PC-3 (cell line): ENCODE measurements at regions of chr15 and their contacts with region 1.

Region 1: DNA sequence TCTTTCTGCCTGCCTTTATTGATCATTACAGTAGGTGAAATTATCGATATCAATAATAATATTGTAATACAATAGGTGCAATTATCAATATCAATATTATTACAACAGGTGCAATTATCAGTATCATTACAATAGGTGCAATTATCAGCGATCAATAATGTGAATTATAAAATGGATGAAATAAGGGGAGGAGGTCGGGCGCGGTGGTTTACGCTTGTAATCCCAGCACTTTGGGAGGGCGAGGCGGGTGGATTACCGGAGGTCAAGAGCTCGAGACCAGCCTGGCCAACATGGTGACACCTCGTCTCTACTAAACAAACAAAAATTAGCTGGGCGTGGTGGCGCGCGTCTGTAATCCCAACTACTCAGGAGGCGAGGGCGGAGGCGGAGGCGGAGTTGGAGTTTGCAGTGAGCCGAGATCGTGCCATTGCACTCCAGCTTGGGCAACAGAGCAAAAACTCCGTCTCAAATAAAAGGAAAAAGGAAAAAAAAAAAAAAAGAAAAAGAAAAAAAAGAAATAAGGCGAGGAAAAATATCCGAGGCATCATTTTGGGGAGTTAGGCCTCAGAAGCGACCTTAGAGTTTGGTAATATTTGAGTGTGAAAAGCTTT is 611 bp upstream of the BNIP2 start:
- DNase-seq: peak; percentile 52
- ATAC-seq: peak; percentile 63
- H3K4me3 ChIP-seq: peak overlapping the region; percentile 98
- H3K27ac ChIP-seq: no peak overlapping the region
- H3K4me1 ChIP-seq: peaks cover 19% of the 10 kb centered on the region
- H3K27me3 ChIP-seq: no peaks in the 10 kb centered on the region
- CTCF ChIP-seq: no peak

Region 2: DNA sequence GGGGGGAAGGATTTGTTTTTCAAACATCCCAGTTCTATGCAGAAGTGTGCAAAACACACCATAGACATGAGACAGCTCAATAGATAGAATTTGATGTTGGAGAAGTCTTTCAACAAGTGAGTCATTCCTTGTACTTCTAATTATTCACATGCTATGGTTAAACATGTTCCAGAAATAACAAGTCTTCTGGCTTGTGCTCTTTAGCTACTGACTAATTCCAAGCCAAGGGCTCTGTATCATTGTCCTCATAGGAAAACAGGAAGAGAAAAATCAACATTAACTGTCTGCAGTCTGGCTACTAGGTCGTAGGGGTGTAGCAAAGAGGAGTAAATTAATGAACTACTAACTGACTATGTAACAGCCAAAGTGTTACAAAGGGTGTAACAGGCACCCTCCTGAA is 457.3 kb before region 1 on chr15:
- CTCF ChIA-PET with region 1: no interaction called
- POLR2A ChIA-PET with region 1: no interaction called
- intact Hi-C with region 1: no loop called
- DNase-seq: peak; percentile 10
- ATAC-seq: peak; percentile 40; the same call in 1 of the 2 replicates
- H3K4me3 ChIP-seq: no peak overlapping the region
- H3K27ac ChIP-seq: no peak overlapping the region
- H3K4me1 ChIP-seq: no peaks in the 10 kb centered on the region
- H3K27me3 ChIP-seq: no peaks in the 10 kb centered on the region
- CTCF ChIP-seq: no peak

Region 3: GRCh38 chr15:59751552-59752413 is 62.1 kb after region 1 on chr15:
- CTCF ChIA-PET with region 1: interaction called, 10 read pairs
- POLR2A ChIA-PET with region 1: no interaction called
- intact Hi-C with region 1: no loop called
- DNase-seq: no peak
- ATAC-seq: no peak
- H3K4me3 ChIP-seq: no peak overlapping the region
- H3K27ac ChIP-seq: no peak overlapping the region
- H3K4me1 ChIP-seq: no peaks in the 10 kb centered on the region
- H3K27me3 ChIP-seq: peaks cover 60% of the 10 kb centered on the region
- CTCF ChIP-seq: peak; percentile 25

Region 4: DNA sequence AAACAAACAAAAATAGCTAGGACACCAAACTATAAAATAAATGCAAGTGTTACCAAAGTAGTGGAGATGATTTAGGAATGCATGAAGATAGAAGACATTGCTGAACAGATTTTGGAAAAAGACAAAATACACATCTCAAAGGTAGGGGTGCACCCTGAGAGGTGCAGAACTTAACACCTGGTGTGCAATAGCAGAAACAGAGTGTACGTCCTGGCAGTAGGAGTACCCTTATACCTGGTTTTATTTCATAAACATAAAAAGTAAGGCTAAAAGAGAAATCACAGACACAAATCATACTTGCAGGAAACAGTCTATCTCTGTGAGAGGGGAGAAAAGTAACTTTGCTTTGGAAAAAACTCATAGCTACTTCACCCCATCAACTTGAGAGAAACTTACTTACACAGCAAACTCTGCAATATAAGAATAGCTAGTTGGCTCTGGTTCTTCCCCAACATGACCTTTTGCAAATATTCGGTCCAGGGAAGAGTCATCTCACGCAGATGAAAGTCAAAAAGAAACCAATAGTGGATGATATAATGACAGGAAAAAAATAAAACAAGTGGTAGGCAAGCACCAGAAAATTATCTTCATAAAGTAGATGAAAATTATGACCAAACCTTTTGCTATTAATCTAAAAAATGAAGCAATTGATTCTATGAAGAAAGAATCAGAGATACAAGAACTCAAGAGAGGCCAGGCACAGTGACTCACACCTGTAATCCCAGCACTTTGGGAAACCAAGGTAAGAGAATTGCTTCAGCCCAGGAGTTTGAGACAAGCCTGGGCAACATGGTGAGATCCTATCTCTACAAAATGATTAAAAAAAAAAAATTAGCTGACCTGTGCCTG is 108.2 kb after region 1 on chr15:
- CTCF ChIA-PET with region 1: no interaction called
- POLR2A ChIA-PET with region 1: no interaction called
- intact Hi-C with region 1: no loop called
- DNase-seq: no peak
- ATAC-seq: no peak
- H3K4me3 ChIP-seq: no peak overlapping the region
- H3K27ac ChIP-seq: no peak overlapping the region
- H3K4me1 ChIP-seq: no peaks in the 10 kb centered on the region
- H3K27me3 ChIP-seq: peaks cover 41% of the 10 kb centered on the region
- CTCF ChIP-seq: no peak